ENCODE measurements at regions of chr18 and their contacts with region 1.

Region 1: GRCh38 chr18:1585879-1586488 is 681.3 kb downstream of the ADCYAP1 start:
- DNase-seq: no peak
- ATAC-seq: peak; percentile 54 to 59
- H3K4me3 ChIP-seq: no peak overlapping the region
- H3K27ac ChIP-seq: no peak overlapping the region
- H3K4me1 ChIP-seq: no peaks in the 10 kb centered on the region
- H3K27me3 ChIP-seq: no peaks in the 10 kb centered on the region

Region 2: GRCh38 chr18:2121221-2121620 is 535.2 kb after region 1 on chr18:
- intact Hi-C with region 1: loop called in 1 of 4 experiments (anchors 10 kb)
- DNase-seq: no peak
- ATAC-seq: no peak
- H3K4me3 ChIP-seq: no peak overlapping the region
- H3K27ac ChIP-seq: no peak overlapping the region
- H3K4me1 ChIP-seq: no peaks in the 10 kb centered on the region
- H3K27me3 ChIP-seq: no peaks in the 10 kb centered on the region

Region 3: DNA sequence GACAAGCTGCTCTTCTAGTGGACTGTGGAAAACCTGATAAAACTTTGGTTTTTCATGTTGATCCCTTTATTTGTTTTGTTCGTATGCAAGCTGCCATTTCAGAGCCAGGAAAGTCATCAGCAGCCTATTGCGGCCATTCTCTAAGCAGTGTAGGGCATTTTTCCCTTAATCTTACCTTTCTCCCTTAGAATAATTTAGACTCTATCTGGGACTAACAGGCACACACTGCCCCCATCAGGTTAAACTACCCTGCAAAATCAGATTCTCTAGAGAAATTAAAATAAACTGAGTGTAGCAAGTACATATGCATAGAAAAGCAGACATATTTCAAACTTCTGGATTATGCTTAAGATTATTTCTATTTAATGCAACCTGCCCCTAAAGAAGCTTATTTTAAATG is 637.9 kb after region 1 on chr18:
- intact Hi-C with region 1: loop called in 1 of 4 experiments (anchors 10 kb)
- DNase-seq: peak in 2 of 3 donors; percentile 8 to 34
- ATAC-seq: peak in 1 of 2 donors; percentile 72
- H3K4me3 ChIP-seq: peak overlapping the region; percentile 36
- H3K27ac ChIP-seq: no peak overlapping the region
- H3K4me1 ChIP-seq: no peaks in the 10 kb centered on the region
- H3K27me3 ChIP-seq: no peaks in the 10 kb centered on the region

Measured in right cardiac atrium (tissue), 5 donors.